ENCODE measurements at regions of chr1 and their contacts with region 1.

Region 1: GRCh38 chr1:183901748-183902330 is 96.9 kb downstream of the RGL1 start:
- DNase-seq: peak; percentile 56
- ATAC-seq: peak; percentile 55
- H3K4me3 ChIP-seq: no peak overlapping the region
- H3K27ac ChIP-seq: peak overlapping the region; percentile 88
- H3K4me1 ChIP-seq: peaks cover 53% of the 10 kb centered on the region
- H3K27me3 ChIP-seq: no peaks in the 10 kb centered on the region
- CTCF ChIP-seq: no peak
- EP300 ChIP-seq: peak; percentile 48 to 68; a peak in 3 of 4 replicates
- POLR2A ChIP-seq: no peak
- RAD21 ChIP-seq: no peak

Region 2: DNA sequence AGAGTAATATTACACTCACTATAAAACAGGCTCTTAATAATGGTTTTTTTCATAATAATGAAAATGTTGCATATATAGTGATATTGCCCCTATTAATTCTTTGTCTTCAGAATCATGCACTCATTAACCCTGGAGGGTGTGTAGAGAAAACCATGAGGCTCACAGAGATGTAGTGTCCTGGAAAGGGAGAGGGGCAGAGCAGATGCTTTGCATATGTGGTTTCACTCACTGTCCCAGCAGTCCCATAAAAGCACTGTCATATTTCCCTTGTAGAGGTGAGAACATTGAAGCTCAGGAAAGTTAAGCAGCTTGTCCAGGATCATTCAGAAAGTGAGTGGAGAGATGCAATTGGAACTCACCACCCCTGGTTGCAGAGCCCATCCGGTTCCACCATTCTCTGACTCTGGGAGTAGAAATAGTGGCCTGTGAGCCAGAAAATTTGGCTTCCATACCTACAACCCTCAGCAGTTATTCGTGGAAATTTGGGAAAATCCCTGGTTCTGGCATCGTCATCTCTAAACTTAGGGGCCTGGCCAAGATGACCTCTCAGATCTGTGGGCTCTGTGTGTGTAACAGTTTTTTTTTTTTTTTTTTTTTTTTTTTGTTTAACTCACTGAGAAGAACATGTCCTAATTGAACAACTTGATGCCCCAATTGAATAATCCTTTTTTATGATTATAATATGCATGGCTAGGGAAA is 10.5 kb before region 1 on chr1:
- CTCF ChIA-PET with region 1: interaction called, 8 read pairs
- POLR2A ChIA-PET with region 1: interaction called, 6 read pairs
- RAD21 ChIA-PET with region 1: interaction called, 7 read pairs
- SMC1A ChIA-PET with region 1: interaction called, 12 read pairs
- in situ Hi-C with region 1: no loop called
- intact Hi-C with region 1: no loop called
- DNase-seq: no peak
- ATAC-seq: peak; percentile 79
- H3K4me3 ChIP-seq: no peak overlapping the region
- H3K27ac ChIP-seq: peak overlapping the region; percentile 56
- H3K4me1 ChIP-seq: peaks cover 71% of the 10 kb centered on the region
- H3K27me3 ChIP-seq: no peaks in the 10 kb centered on the region
- CTCF ChIP-seq: no peak
- EP300 ChIP-seq: no peak
- POLR2A ChIP-seq: no peak
- RAD21 ChIP-seq: no peak

Measured in GM12878 (cell line).